Ascending aorta (tissue), 2 donors: ENCODE measurements at regions of chr21 and their contacts with region 1.

Region 1: GRCh38 chr21:27700974-27701614 is 734.2 kb upstream of the ADAMTS5 start:
- DNase-seq: peak; percentile 18 to 88
- H3K4me3 ChIP-seq: no peak overlapping the region
- H3K27ac ChIP-seq: no peak overlapping the region
- H3K4me1 ChIP-seq: no peaks in the 10 kb centered on the region
- H3K27me3 ChIP-seq: no peaks in the 10 kb centered on the region
- CTCF ChIP-seq: peak; percentile 73 to 87 (median 81)

Region 2: GRCh38 chr21:26769613-26770188 is 931.4 kb before region 1 on chr21:
- intact Hi-C with region 1: loop called (anchors 5 kb)
- DNase-seq: no peak
- H3K4me3 ChIP-seq: no peak overlapping the region
- H3K27ac ChIP-seq: no peak overlapping the region
- H3K4me1 ChIP-seq: no peaks in the 10 kb centered on the region
- H3K27me3 ChIP-seq: no peaks in the 10 kb centered on the region
- CTCF ChIP-seq: peak; percentile 31 to 70 (median 70)

Region 3: DNA sequence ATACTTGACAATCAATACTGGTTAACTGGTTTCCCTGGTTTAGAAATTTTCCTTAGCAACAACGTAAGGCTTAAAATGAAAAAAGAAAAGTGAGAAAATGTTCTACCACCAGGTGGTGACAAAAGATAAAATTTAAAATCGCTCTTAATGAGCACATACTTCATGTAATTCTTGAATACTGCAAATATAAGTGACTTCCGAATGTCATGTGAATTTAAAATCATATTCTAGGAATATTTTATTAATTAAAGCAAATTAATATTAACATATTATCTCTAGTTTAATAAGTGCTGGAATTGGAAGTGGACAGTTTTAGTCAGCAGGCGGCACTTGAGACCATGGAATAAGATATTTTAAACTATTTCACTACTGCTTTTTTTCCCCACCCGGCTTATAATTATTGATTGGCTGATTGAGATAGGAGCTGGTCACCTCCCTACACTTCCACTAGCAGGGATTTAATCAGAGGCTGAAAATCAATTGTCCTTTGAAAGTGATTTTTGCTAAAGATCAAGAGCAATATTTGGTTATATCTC is 850.9 kb before region 1 on chr21:
- intact Hi-C with region 1: loop called (anchors 1 kb)
- DNase-seq: no peak
- H3K4me3 ChIP-seq: peak overlapping the region in 1 of 2 donors; percentile 29
- H3K27ac ChIP-seq: no peak overlapping the region
- H3K4me1 ChIP-seq: peaks cover 0 to 3% of the 10 kb centered on the region in 2 donors
- H3K27me3 ChIP-seq: no peaks in the 10 kb centered on the region
- CTCF ChIP-seq: peak; percentile 61 to 76 (median 64)

Region 4: GRCh38 chr21:28063241-28064216 is 362.4 kb after region 1 on chr21:
- intact Hi-C with region 1: loop called (anchors 10 kb)
- DNase-seq: no peak
- H3K4me3 ChIP-seq: no peak overlapping the region
- H3K27ac ChIP-seq: no peak overlapping the region
- H3K4me1 ChIP-seq: peaks cover 0 to 5% of the 10 kb centered on the region in 2 donors
- H3K27me3 ChIP-seq: no peaks in the 10 kb centered on the region
- CTCF ChIP-seq: no peak

Region 5: GRCh38 chr21:28336314-28336713 is 635.2 kb after region 1 on chr21:
- intact Hi-C with region 1: loop called (anchors 2 kb)
- DNase-seq: peak in 1 of 2 donors; percentile 63
- H3K4me3 ChIP-seq: no peak overlapping the region
- H3K27ac ChIP-seq: no peak overlapping the region
- H3K4me1 ChIP-seq: peaks cover 0 to 4% of the 10 kb centered on the region in 2 donors
- H3K27me3 ChIP-seq: no peaks in the 10 kb centered on the region
- CTCF ChIP-seq: peak in 2 of 3 experiments; percentile 17 to 53